IMR-90 (cell line): ENCODE measurements at regions of chr3 and their contacts with region 1.

Region 1: DNA sequence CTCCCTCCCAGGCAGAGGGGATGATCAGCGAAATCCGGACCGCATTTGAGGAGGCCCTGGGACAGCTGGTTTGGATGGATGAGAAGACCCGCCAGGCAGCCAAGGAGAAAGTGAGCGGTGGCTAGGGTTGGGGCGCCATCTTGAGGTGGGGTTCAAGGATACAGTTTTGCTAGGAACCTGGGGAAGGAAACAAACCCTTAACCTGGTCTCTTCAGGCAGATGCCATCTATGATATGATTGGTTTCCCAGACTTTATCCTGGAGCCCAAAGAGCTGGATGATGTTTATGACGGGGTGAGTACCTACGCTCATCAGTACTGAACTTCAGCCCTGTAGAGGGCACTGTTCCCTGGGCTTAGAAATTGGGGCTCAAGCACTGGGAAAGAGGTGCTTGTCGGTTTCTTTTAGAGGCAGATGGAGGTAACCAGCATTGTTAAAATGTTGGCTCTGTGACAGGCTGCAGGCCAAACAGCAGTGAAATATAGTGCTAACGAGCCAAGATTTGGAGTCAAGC is 9.6 kb upstream of the PSMD2 start:
- DNase-seq: peak; percentile 38
- ATAC-seq: peak; percentile 79
- H3K4me3 ChIP-seq: no peak overlapping the region
- H3K27ac ChIP-seq: no peak overlapping the region
- H3K4me1 ChIP-seq: no peaks in the 10 kb centered on the region
- H3K27me3 ChIP-seq: peaks cover 24% of the 10 kb centered on the region
- CTCF ChIP-seq: peak; percentile 65
- POLR2A ChIP-seq: no peak
- RAD21 ChIP-seq: peak; percentile 82

Region 2: GRCh38 chr3:184145111-184145524 is 144.4 kb before region 1 on chr3:
- CTCF ChIA-PET with region 1: no interaction called
- POLR2A ChIA-PET with region 1: no interaction called
- dilution Hi-C with region 1: no loop called
- in situ Hi-C with region 1: no loop called
- intact Hi-C with region 1: loop called (anchors 1 kb)
- DNase-seq: peak; percentile 61
- ATAC-seq: peak; percentile 86
- H3K4me3 ChIP-seq: no peak overlapping the region
- H3K27ac ChIP-seq: no peak overlapping the region; the same call in 1 of the 2 replicates
- H3K4me1 ChIP-seq: 0 out of 2 replicates have a peak, but pooled peaks cover 2% of the 10 kb centered on the region
- H3K27me3 ChIP-seq: no peaks in the 10 kb centered on the region
- CTCF ChIP-seq: peak; percentile 53
- POLR2A ChIP-seq: no peak
- RAD21 ChIP-seq: peak; percentile 63

Region 3: DNA sequence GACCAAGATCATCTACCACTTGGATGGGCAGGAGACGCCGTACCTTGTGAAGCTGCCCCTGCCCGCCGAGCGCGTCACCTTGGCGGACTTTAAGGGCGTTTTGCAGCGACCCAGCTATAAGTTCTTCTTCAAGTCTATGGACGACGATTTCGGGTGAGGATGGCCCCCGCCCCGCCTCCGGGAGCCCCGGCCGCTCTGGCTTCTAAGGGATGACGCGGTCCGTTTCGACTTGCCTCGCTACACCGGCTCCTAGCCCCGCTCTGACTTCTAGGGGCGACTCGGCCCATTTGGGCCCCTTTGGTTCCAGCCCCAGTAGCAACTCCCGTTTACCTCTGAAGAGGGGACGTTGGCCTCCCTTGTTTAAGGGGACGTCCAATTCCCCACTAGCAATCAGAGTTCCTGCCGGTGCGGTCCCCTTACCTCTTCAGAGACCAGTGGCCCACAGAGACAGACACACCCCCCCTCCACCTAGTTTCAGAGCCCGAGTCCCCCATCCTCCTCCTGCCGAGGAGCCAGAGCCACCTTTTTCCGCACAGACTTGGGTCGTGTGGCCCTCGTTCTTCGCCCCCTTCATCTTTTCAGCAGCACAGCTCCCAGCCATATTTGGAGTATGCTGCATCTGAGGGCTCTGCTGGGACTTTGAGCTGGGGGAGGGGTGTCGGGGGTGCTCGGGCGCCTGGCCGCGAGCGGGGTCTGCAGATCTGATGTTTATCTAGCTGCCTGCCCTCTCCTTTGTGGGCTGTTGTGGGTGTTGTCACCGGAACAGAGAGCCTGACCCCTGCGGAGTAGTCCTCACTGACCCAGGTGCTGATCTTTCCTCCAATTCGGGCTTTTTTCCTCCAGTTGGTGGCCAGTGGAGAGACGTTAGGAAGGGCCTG is 133.6 kb before region 1 on chr3:
- CTCF ChIA-PET with region 1: no interaction called
- POLR2A ChIA-PET with region 1: no interaction called
- dilution Hi-C with region 1: no loop called
- in situ Hi-C with region 1: no loop called
- intact Hi-C with region 1: no loop called
- DNase-seq: peak; percentile 16
- ATAC-seq: peak; percentile 15
- H3K4me3 ChIP-seq: peak overlapping the region; percentile 99
- H3K27ac ChIP-seq: peak overlapping the region; percentile 96
- H3K4me1 ChIP-seq: peaks cover 14% of the 10 kb centered on the region
- H3K27me3 ChIP-seq: no peaks in the 10 kb centered on the region
- CTCF ChIP-seq: no peak
- POLR2A ChIP-seq: no peak
- RAD21 ChIP-seq: no peak

Region 4: DNA sequence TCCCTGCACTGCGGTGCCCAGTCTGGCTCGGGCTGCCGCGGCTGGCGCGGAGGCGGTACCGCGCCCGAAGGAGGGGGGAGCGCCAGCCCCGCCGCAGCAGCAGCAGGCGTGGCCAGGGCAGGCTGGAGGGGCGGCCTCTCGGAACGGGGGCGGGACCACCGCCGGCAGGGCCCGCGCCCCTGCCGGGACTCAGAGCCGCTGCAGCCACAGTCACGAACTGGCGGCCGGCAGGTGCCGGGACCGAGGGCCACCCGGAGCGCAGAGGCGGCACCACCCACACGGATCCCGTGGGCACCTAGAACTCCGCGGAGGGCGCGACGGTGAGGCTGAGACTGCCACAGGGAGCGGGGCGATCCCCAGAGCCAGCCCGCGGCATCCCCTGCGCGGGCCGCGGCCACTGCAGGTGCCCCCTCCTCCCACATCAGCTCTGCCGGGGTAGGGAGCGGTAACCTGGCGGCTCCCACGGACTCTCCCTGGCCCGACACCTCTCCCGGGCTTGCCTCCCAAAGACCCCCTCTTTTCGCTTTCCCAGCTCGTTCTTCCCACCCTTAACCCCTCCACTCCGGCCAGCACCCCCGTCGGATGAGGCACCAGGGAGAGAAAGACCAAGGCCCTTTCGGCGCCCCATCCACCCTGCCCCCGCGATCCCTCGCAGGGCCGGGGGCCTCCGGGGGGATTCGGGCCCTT is 59.9 kb before region 1 on chr3 and contains the start of gene VWA5B2:
- CTCF ChIA-PET with region 1: no interaction called
- POLR2A ChIA-PET with region 1: no interaction called
- dilution Hi-C with region 1: no loop called
- in situ Hi-C with region 1: no loop called
- intact Hi-C with region 1: loop called (anchors 5 kb)
- DNase-seq: peak; percentile 18
- ATAC-seq: peak; percentile 94
- H3K4me3 ChIP-seq: peak within 1 kb of the TSS; percentile 47
- H3K27ac ChIP-seq: no peak within 1 kb of the TSS
- H3K4me1 ChIP-seq: no peaks in the 10 kb centered on the region; the same call in 1 of the 2 replicates
- H3K27me3 ChIP-seq: peaks cover 64% of the 10 kb centered on the region
- CTCF ChIP-seq: peak; percentile 18; the same call in 1 of the 2 replicates
- POLR2A ChIP-seq: no peak
- RAD21 ChIP-seq: no peak
- total RNA-seq, gene VWA5B2: not detected in 2 replicates

Region 5: GRCh38 chr3:184543843-184544512 is 254.5 kb after region 1 on chr3:
- CTCF ChIA-PET with region 1: no interaction called
- POLR2A ChIA-PET with region 1: no interaction called
- dilution Hi-C with region 1: no loop called
- in situ Hi-C with region 1: no loop called
- intact Hi-C with region 1: no loop called
- DNase-seq: peak; percentile 69
- ATAC-seq: peak; percentile 96
- H3K4me3 ChIP-seq: no peak overlapping the region
- H3K27ac ChIP-seq: no peak overlapping the region
- H3K4me1 ChIP-seq: no peaks in the 10 kb centered on the region
- H3K27me3 ChIP-seq: peaks cover 52% of the 10 kb centered on the region
- CTCF ChIP-seq: peak; percentile 91
- POLR2A ChIP-seq: no peak
- RAD21 ChIP-seq: peak; percentile 90